ENCODE measurements at regions of chr1 and their contacts with region 1.

Region 1: DNA sequence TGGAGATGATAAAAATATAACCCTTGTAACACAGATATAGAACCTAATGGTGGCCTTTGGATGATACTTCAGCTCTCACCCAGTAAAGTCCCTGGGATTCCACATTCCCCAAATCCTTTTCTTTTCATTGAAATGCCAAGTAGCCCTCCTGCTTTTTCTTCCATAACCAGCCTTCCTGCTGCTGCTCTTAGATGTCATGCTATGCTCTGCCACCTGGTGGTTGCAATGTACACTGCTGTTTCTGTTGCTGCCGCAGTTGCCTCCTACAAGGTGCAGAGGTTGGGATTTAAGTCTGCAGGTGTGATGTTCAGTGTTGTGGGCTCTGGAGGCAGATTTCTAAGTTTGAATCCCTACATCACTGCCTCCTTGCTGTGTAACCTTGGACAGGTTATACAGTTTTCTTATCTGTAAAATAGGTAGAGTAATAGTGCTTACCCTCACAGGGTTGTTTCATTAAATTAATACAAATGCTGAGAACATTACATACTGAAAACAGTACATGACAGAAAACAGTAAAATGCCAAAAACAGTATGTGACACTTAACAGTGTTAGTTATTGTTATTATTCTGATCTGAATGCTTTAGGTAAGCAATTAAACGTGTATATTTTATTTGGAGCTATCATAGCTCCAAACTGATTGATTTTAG is 64.3 kb downstream of the CAMSAP2 start:
- DNase-seq: peak in 1 of 2 donors; percentile 90
- H3K4me3 ChIP-seq: no peak overlapping the region
- H3K27ac ChIP-seq: no peak overlapping the region
- H3K4me1 ChIP-seq: peaks cover 9% of the 10 kb centered on the region
- H3K27me3 ChIP-seq: no peaks in the 10 kb centered on the region
- CTCF ChIP-seq: peak; percentile 90 to 95 (median 94)
- POLR2A ChIP-seq: no peak

Region 2: GRCh38 chr1:200530623-200531261 is 272.2 kb before region 1 on chr1:
- intact Hi-C with region 1: no loop called
- DNase-seq: no peak
- H3K4me3 ChIP-seq: no peak overlapping the region
- H3K27ac ChIP-seq: no peak overlapping the region
- H3K4me1 ChIP-seq: no peaks in the 10 kb centered on the region
- H3K27me3 ChIP-seq: no peaks in the 10 kb centered on the region
- CTCF ChIP-seq: no peak
- POLR2A ChIP-seq: no peak

Region 3: GRCh38 chr1:200619894-200620272 is 183.1 kb before region 1 on chr1:
- intact Hi-C with region 1: loop called (anchors 5 kb)
- DNase-seq: no peak
- H3K4me3 ChIP-seq: peak overlapping the region; percentile 57 to 65
- H3K27ac ChIP-seq: peak overlapping the region; percentile 44
- H3K4me1 ChIP-seq: peaks cover 19% of the 10 kb centered on the region
- H3K27me3 ChIP-seq: no peaks in the 10 kb centered on the region
- CTCF ChIP-seq: no peak
- POLR2A ChIP-seq: no peak

Region 4: GRCh38 chr1:200724064-200724463 is 78.9 kb before region 1 on chr1:
- intact Hi-C with region 1: no loop called
- DNase-seq: no peak
- H3K4me3 ChIP-seq: no peak overlapping the region
- H3K27ac ChIP-seq: no peak overlapping the region
- H3K4me1 ChIP-seq: no peaks in the 10 kb centered on the region
- H3K27me3 ChIP-seq: no peaks in the 10 kb centered on the region
- CTCF ChIP-seq: no peak
- POLR2A ChIP-seq: no peak

Region 5: DNA sequence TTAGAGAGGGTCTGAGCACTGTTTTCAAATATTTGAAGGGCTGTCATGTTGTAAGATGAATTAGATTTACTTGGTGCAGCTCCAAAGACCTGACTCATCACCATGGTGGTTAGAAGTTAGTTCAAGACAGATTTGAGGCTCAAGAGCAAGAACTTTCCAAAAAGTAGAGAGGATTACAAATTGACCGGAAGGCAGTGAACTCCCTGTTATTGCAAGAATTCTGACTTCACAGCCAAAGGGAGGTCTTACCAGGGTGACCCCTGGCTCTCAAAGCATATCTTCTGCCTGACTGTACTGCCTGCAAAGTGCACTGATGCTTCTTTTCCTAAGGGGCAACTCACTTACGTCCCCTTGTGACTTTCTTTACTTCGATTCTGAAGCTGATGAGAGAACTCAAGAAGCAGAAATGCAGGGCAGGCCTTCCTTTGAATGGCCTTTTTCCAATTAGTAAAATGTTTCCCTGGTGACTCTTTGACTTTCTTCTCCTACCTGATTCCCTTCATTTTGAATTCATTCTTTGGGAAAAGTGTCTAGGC is 822.3 kb after region 1 on chr1:
- intact Hi-C with region 1: no loop called
- DNase-seq: no peak
- H3K4me3 ChIP-seq: no peak overlapping the region
- H3K27ac ChIP-seq: no peak overlapping the region
- H3K4me1 ChIP-seq: no peaks in the 10 kb centered on the region
- H3K27me3 ChIP-seq: no peaks in the 10 kb centered on the region
- CTCF ChIP-seq: no peak
- POLR2A ChIP-seq: no peak